GM12878 (cell line): ENCODE measurements at regions of chr1 and their contacts with region 1.

Region 1: GRCh38 chr1:168342572-168343280 is 62.0 kb downstream of the TBX19 start:
- DNase-seq: peak; percentile 61
- ATAC-seq: peak; percentile 98
- H3K4me3 ChIP-seq: no peak overlapping the region
- H3K27ac ChIP-seq: no peak overlapping the region
- H3K4me1 ChIP-seq: peaks cover 10% of the 10 kb centered on the region
- H3K27me3 ChIP-seq: no peaks in the 10 kb centered on the region
- CTCF ChIP-seq: peak; percentile 73 to 91 (median 82)
- EP300 ChIP-seq: no peak
- POLR2A ChIP-seq: no peak
- RAD21 ChIP-seq: peak; percentile 86

Region 2: GRCh38 chr1:168234846-168235547 is 107.7 kb before region 1 on chr1:
- CTCF ChIA-PET with region 1: interaction called, 37 read pairs
- POLR2A ChIA-PET with region 1: no interaction called
- RAD21 ChIA-PET with region 1: interaction called, 20 read pairs
- SMC1A ChIA-PET with region 1: interaction called, 32 read pairs
- in situ Hi-C with region 1: no loop called
- intact Hi-C with region 1: loop called (anchors 5 kb)
- DNase-seq: no peak
- ATAC-seq: peak; percentile 98
- H3K4me3 ChIP-seq: no peak overlapping the region
- H3K27ac ChIP-seq: no peak overlapping the region
- H3K4me1 ChIP-seq: no peaks in the 10 kb centered on the region; the same call in 1 of the 2 replicates
- H3K27me3 ChIP-seq: no peaks in the 10 kb centered on the region
- CTCF ChIP-seq: peak; percentile 63 to 80 (median 79)
- EP300 ChIP-seq: no peak
- POLR2A ChIP-seq: no peak
- RAD21 ChIP-seq: peak; percentile 69

Region 3: DNA sequence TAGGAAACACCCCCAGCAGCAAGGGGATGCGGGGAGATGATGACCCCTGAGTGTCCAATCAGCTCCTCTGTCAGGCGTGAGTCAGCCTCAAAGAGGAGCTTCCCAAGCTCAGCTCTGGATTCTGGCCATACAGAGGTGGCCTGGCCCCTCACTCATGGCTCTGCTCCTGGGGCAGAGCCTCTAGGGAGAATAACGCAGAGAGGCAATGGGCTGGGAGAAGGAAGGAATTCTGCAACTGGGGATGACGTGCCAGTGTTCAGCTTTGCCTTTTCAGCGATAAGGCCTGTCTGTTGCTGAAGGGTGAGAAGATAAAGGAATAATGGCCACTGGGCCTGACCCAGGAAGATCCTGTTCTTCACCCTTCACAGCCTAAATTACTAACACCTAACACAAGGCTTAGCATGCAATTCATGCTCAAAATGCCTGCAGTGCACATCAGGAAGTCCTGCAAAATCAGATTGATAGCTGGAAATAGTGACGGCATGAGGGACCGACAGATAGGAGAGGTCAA is 30.2 kb after region 1 on chr1:
- CTCF ChIA-PET with region 1: interaction called, 16 read pairs
- POLR2A ChIA-PET with region 1: no interaction called
- RAD21 ChIA-PET with region 1: interaction called, 4 read pairs
- SMC1A ChIA-PET with region 1: interaction called, 9 read pairs
- in situ Hi-C with region 1: no loop called
- intact Hi-C with region 1: no loop called
- DNase-seq: no peak
- ATAC-seq: no peak
- H3K4me3 ChIP-seq: no peak overlapping the region
- H3K27ac ChIP-seq: no peak overlapping the region
- H3K4me1 ChIP-seq: no peaks in the 10 kb centered on the region
- H3K27me3 ChIP-seq: no peaks in the 10 kb centered on the region
- CTCF ChIP-seq: no peak
- EP300 ChIP-seq: no peak
- POLR2A ChIP-seq: no peak
- RAD21 ChIP-seq: no peak

Region 4: GRCh38 chr1:168433238-168433637 is 90.5 kb after region 1 on chr1:
- CTCF ChIA-PET with region 1: interaction called, 283 read pairs
- POLR2A ChIA-PET with region 1: interaction called, 3 read pairs
- RAD21 ChIA-PET with region 1: interaction called, 193 read pairs
- SMC1A ChIA-PET with region 1: interaction called, 239 read pairs
- in situ Hi-C with region 1: no loop called
- intact Hi-C with region 1: loop called (anchors 2 kb)
- DNase-seq: no peak
- ATAC-seq: no peak
- H3K4me3 ChIP-seq: no peak overlapping the region
- H3K27ac ChIP-seq: no peak overlapping the region
- H3K4me1 ChIP-seq: no peaks in the 10 kb centered on the region
- H3K27me3 ChIP-seq: no peaks in the 10 kb centered on the region; a peak in 2 of 4 replicates
- CTCF ChIP-seq: no peak
- EP300 ChIP-seq: no peak
- POLR2A ChIP-seq: no peak
- RAD21 ChIP-seq: no peak

Region 5: GRCh38 chr1:168553680-168554553 is 211.2 kb after region 1 on chr1:
- CTCF ChIA-PET with region 1: interaction called, 12 read pairs
- POLR2A ChIA-PET with region 1: no interaction called
- RAD21 ChIA-PET with region 1: interaction called, 15 read pairs
- SMC1A ChIA-PET with region 1: interaction called, 14 read pairs
- in situ Hi-C with region 1: no loop called
- intact Hi-C with region 1: no loop called
- DNase-seq: no peak
- ATAC-seq: peak; percentile 70
- H3K4me3 ChIP-seq: no peak overlapping the region
- H3K27ac ChIP-seq: no peak overlapping the region
- H3K4me1 ChIP-seq: no peaks in the 10 kb centered on the region; the same call in 1 of the 2 replicates
- H3K27me3 ChIP-seq: no peaks in the 10 kb centered on the region
- CTCF ChIP-seq: no peak
- EP300 ChIP-seq: peak in 1 of 2 experiments; percentile 13; a peak in 2 of 4 replicates
- POLR2A ChIP-seq: no peak
- RAD21 ChIP-seq: no peak

Region 6: GRCh38 chr1:169106095-169106920 is 763.6 kb after region 1 on chr1 and contains the start of gene ATP1B1:
- CTCF ChIA-PET with region 1: interaction called, 35 read pairs
- POLR2A ChIA-PET with region 1: no interaction called
- RAD21 ChIA-PET with region 1: interaction called, 26 read pairs
- SMC1A ChIA-PET with region 1: interaction called, 21 read pairs
- in situ Hi-C with region 1: no loop called
- intact Hi-C with region 1: no loop called
- DNase-seq: no peak
- ATAC-seq: peak; percentile 94
- H3K4me3 ChIP-seq: peak within 1 kb of the TSS; percentile 86
- H3K27ac ChIP-seq: no peak within 1 kb of the TSS
- H3K4me1 ChIP-seq: peaks cover 3% of the 10 kb centered on the region; the same call in 1 of the 2 replicates
- H3K27me3 ChIP-seq: peaks cover 2 to 6% of the 10 kb centered on the region in 2 experiments; a peak in 2 of 4 replicates
- CTCF ChIP-seq: peak in 2 of 3 experiments; percentile 21 to 36; a peak in 3 of 6 replicates
- EP300 ChIP-seq: no peak
- POLR2A ChIP-seq: peak; percentile 84
- RAD21 ChIP-seq: no peak
- polyA plus RNA-seq, gene ATP1B1: 0.84 to 0.90 TPM